CD8-positive, alpha-beta memory T cell (primary cell): ENCODE measurements at regions of chr16 and their contacts with region 1.

Region 1: GRCh38 chr16:67883872-67884261 is 818 bp upstream of the NRN1L start:
- DNase-seq: peak; percentile 66 to 80 (median 67)
- H3K4me3 ChIP-seq: no peak overlapping the region
- H3K4me3 Mint-ChIP-seq: no peak overlapping the region
- H3K27ac ChIP-seq: no peak overlapping the region
- H3K27ac Mint-ChIP-seq: peak overlapping the region in 3 of 8 donors; percentile 17 to 82 (median 24)
- H3K4me1 ChIP-seq: no peaks in the 10 kb centered on the region
- H3K4me1 Mint-ChIP-seq: no peaks in the 10 kb centered on the region
- H3K27me3 ChIP-seq: no peaks in the 10 kb centered on the region
- H3K27me3 Mint-ChIP-seq: no peaks in the 10 kb centered on the region

Region 2: DNA sequence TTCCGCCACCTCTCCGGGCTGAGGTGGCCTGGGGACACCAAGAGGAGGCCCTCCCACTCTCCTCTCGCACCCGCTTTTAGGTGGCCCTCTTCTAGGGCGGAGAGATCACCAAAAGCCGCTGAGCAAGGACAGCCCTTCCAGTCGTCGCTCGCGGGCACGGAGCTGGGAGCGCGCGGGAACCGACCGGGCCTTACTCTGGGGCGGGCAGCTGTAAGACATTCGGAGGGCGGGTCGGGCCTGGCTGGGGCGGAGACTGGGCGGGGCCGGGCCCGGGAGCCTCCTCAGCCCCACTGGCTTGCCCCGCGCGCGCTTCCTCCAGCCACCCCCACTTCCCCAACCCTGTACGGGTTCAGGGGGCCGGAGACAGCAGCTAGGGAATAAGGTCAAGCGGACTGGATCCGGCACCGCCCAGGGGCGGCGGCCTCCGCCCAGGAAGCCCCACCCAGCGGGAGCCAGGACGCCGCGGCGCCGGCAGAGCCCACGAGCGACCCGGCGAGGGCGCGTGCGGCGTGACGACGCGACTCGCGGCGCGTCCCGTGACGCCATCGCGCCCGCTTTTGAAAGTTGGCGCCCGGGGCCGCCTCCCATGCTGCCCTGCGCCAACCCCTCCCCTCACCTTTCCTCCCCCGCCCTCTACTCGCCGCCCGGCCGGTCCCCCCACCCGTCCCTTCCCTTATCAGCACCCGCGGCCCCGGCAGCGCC is 321.9 kb before region 1 on chr16:
- CTCF ChIA-PET with region 1: no interaction called
- POLR2A ChIA-PET with region 1: no interaction called
- DNase-seq: peak; percentile 95 to 98 (median 96)
- H3K4me3 ChIP-seq: peak overlapping the region; percentile 67
- H3K4me3 Mint-ChIP-seq: peak overlapping the region; percentile 87 to 98 (median 91)
- H3K27ac ChIP-seq: peak overlapping the region; percentile 78
- H3K27ac Mint-ChIP-seq: peak overlapping the region; percentile 85 to 96 (median 93)
- H3K4me1 ChIP-seq: peaks cover 32% of the 10 kb centered on the region
- H3K4me1 Mint-ChIP-seq: peaks cover 35 to 60% (median 48%) of the 10 kb centered on the region in 3 donors
- H3K27me3 ChIP-seq: no peaks in the 10 kb centered on the region
- H3K27me3 Mint-ChIP-seq: no peaks in the 10 kb centered on the region

Region 3: GRCh38 chr16:67825119-67825518 is 58.7 kb before region 1 on chr16:
- CTCF ChIA-PET with region 1: no interaction called
- POLR2A ChIA-PET with region 1: no interaction called
- DNase-seq: no peak
- H3K4me3 ChIP-seq: no peak overlapping the region
- H3K4me3 Mint-ChIP-seq: no peak overlapping the region
- H3K27ac ChIP-seq: no peak overlapping the region
- H3K27ac Mint-ChIP-seq: peak overlapping the region in 1 of 8 donors; percentile 38
- H3K4me1 ChIP-seq: no peaks in the 10 kb centered on the region
- H3K4me1 Mint-ChIP-seq: no peaks in the 10 kb centered on the region
- H3K27me3 ChIP-seq: no peaks in the 10 kb centered on the region
- H3K27me3 Mint-ChIP-seq: no peaks in the 10 kb centered on the region

Region 4: DNA sequence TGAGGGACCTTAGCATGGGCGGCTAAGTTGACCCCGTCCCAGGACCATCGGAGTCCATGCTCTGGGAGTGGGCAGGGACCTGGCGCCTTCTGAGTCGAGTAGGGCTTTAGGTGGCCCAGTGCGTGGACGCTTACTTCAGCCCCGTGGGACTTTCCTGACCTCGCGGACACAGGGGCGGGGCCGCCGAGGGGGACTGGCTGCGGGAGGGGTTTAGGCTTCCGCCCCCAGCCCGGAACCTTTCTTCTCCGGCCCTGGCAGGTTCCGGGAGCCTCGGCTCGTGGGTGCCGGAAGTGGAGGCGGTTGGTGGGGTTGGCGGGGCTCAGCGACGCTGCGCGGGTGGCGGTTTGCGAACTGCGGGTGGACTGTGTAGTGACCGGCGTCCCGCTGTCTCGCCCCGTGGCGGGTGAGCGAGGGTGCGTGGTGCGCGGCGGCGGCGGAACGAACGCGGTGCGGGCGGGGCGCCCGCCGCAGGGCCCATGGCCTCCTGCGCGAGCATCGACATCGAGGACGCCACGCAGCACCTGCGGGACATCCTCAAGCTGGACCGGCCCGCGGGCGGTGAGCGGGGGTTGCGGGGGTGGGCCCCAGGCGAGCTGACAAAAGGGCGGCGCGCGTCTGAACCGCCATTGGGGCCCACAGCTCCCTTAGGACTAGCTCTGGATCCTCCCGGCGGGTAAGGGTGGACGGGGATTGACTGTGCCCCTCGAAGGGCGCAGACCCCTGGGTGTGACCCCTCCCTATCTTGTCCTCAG is 10.9 kb before region 1 on chr16 and contains the start of gene EDC4:
- CTCF ChIA-PET with region 1: interaction called, 15 read pairs
- POLR2A ChIA-PET with region 1: interaction called, 3 read pairs
- DNase-seq: peak; percentile 81 to 91 (median 84)
- H3K4me3 ChIP-seq: peak within 1 kb of the TSS; percentile 79
- H3K4me3 Mint-ChIP-seq: peak within 1 kb of the TSS; percentile 91 to 96 (median 93)
- H3K27ac ChIP-seq: peak within 1 kb of the TSS; percentile 91
- H3K27ac Mint-ChIP-seq: peak within 1 kb of the TSS; percentile 88 to 96 (median 94)
- H3K4me1 ChIP-seq: peaks cover 35% of the 10 kb centered on the region
- H3K4me1 Mint-ChIP-seq: peaks cover 33 to 42% (median 39%) of the 10 kb centered on the region in 3 donors
- H3K27me3 ChIP-seq: no peaks in the 10 kb centered on the region
- H3K27me3 Mint-ChIP-seq: no peaks in the 10 kb centered on the region
- total RNA-seq, gene EDC4: 105 to 108 TPM

Region 5: GRCh38 chr16:67935402-67936123 is 51.7 kb after region 1 on chr16:
- CTCF ChIA-PET with region 1: interaction called, 27 read pairs
- POLR2A ChIA-PET with region 1: no interaction called
- DNase-seq: peak; percentile 90 to 97 (median 95)
- H3K4me3 ChIP-seq: peak overlapping the region; percentile 97
- H3K4me3 Mint-ChIP-seq: peak overlapping the region; percentile 100
- H3K27ac ChIP-seq: peak overlapping the region; percentile 87
- H3K27ac Mint-ChIP-seq: peak overlapping the region; percentile 96 to 99 (median 98)
- H3K4me1 ChIP-seq: peaks cover 39% of the 10 kb centered on the region
- H3K4me1 Mint-ChIP-seq: peaks cover 34 to 54% (median 34%) of the 10 kb centered on the region in 3 donors
- H3K27me3 ChIP-seq: no peaks in the 10 kb centered on the region
- H3K27me3 Mint-ChIP-seq: peaks cover 0 to 3% of the 10 kb centered on the region in 2 donors

Region 6: DNA sequence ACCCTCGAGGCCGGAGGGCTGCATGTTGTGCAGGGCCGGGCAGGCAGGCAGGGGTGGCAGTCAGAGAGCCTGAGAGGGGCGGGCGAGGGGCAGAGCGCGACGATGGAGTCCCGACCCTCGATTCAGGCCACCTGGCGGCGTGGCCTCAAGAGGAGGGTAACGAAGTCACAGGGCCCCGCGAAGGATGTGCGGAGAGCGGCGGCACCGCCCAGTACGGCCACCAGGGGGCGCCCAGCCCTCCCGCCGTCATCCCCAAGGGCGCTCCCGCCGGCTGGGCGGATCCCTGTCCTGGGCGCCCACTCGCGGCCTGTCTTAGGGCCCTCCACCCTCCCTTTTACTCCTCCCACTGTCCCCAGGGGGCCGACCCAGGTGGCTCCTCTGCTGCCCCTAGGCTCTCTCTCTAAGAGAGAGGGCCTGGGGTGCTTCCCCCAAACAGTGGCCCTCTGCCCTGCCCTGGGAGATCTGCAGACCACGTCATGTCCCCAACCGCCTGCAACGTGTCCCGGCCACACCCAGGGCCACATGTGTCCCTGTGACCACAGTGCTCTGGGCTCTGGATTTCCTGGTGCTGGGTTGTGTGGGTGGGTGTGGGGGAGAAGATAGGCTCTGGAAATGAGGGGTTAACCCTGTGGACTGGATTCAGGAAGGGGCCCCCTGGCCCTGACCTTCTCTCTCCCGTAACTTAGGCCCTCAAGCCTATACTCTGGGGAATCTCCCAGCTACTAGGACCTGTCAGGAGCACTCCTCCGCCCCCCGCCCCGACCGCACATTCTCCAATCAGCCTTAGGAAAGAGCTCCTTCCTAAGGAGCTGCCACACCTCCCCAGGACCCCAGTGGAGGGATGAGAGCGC is 109.5 kb after region 1 on chr16:
- CTCF ChIA-PET with region 1: interaction called, 13 read pairs
- POLR2A ChIA-PET with region 1: no interaction called
- DNase-seq: peak; percentile 75 to 85 (median 81)
- H3K4me3 ChIP-seq: peak overlapping the region; percentile 41
- H3K4me3 Mint-ChIP-seq: peak overlapping the region; percentile 73 to 88 (median 82)
- H3K27ac ChIP-seq: peak overlapping the region; percentile 71
- H3K27ac Mint-ChIP-seq: peak overlapping the region; percentile 78 to 98 (median 95)
- H3K4me1 ChIP-seq: peaks cover 23% of the 10 kb centered on the region
- H3K4me1 Mint-ChIP-seq: peaks cover 22 to 48% (median 32%) of the 10 kb centered on the region in 3 donors
- H3K27me3 ChIP-seq: no peaks in the 10 kb centered on the region
- H3K27me3 Mint-ChIP-seq: no peaks in the 10 kb centered on the region

Region 7: GRCh38 chr16:68085259-68086071 is 201.6 kb after region 1 on chr16 and contains the start of gene NFATC3:
- CTCF ChIA-PET with region 1: interaction called, 10 read pairs
- POLR2A ChIA-PET with region 1: no interaction called
- DNase-seq: peak; percentile 97 to 99 (median 99)
- H3K4me3 ChIP-seq: peak within 1 kb of the TSS; percentile 96
- H3K4me3 Mint-ChIP-seq: peak within 1 kb of the TSS; percentile 85 to 93 (median 89)
- H3K27ac ChIP-seq: peak within 1 kb of the TSS; percentile 79
- H3K27ac Mint-ChIP-seq: peak within 1 kb of the TSS; percentile 86 to 98 (median 94)
- H3K4me1 ChIP-seq: peaks cover 74% of the 10 kb centered on the region
- H3K4me1 Mint-ChIP-seq: peaks cover 68 to 77% (median 74%) of the 10 kb centered on the region in 3 donors
- H3K27me3 ChIP-seq: no peaks in the 10 kb centered on the region
- H3K27me3 Mint-ChIP-seq: no peaks in the 10 kb centered on the region
- total RNA-seq, gene NFATC3: 91.1 to 95.9 TPM